Activated T-helper 1 cell treated with anti-CD3 and anti-CD28 coated beads, Interleukin-12 subunit alpha, Interleukin-12 subunit beta, Interleukin-2, Interleukin-4 antibody, amounts not matched to agents 30 ng/mL and 10 ng/mL and 1 ng/mL, durations not matched to agents 14 hours and 24 hours and 36 hours (primary cell): ENCODE measurements at regions of chr1 and their contacts with region 1.

Region 1: GRCh38 chr1:39026051-39026865 is at the start of gene NDUFS5:
- DNase-seq: peak; percentile 78
- H3K4me3 Mint-ChIP-seq: peak within 1 kb of the TSS; percentile 96
- H3K27ac Mint-ChIP-seq: peak within 1 kb of the TSS; percentile 100
- H3K4me1 Mint-ChIP-seq: peaks cover 16% of the 10 kb centered on the region
- H3K27me3 Mint-ChIP-seq: peaks cover 4% of the 10 kb centered on the region
- total RNA-seq, gene NDUFS5: 143 and 150 TPM in 2 replicates

Region 2: DNA sequence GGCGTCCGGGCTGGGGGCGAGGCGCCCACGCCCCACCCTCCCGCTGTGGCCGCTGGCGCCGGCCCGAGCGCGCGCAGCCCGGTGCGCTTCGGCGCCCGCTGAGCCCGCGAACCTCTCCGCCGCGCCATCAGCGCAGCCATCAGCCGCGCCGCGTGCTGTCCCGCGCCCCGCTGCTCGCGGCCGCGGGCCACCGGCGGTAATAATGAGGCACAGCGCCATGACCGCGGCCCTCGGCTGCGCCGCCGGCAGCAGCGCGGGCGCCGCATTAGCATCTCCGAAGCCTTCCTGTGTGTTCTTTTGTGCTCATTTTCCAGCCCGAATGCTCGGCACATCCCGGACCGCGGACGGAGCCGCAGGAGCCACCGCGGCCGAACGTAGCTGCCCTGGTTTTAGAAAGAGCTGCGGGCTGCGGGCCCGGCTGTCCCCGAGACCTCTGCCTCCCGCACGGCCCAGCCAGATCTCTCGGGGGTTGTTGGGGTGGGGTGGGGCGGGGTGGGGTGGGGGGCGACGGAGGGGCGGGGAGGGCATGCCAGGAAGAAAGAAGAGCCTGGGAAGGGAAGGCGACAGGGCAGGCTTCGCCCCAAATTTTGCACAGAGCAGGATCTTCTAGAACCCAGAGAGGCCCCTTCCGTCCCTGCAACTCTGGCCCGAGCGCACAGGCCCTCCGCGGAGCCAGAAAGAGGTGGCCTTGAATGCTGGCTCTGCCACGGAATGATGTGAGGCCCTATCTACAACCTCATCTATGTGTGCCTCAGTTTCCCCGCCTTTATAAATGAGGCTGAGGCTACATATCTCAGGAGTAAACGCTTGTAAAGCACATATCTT is 222.0 kb before region 1 on chr1:
- intact Hi-C with region 1: no loop called
- DNase-seq: no peak
- H3K4me3 Mint-ChIP-seq: peak overlapping the region; percentile 53
- H3K27ac Mint-ChIP-seq: no peak overlapping the region
- H3K4me1 Mint-ChIP-seq: peaks cover 5% of the 10 kb centered on the region
- H3K27me3 Mint-ChIP-seq: peaks cover 50% of the 10 kb centered on the region

Region 3: GRCh38 chr1:38859561-38860453 is 166.5 kb before region 1 on chr1 and contains the start of gene RRAGC:
- intact Hi-C with region 1: loop called (anchors 1 kb)
- DNase-seq: peak; percentile 98
- H3K4me3 Mint-ChIP-seq: peak within 1 kb of the TSS; percentile 89
- H3K27ac Mint-ChIP-seq: peak within 1 kb of the TSS; percentile 74
- H3K4me1 Mint-ChIP-seq: peaks cover 41% of the 10 kb centered on the region
- H3K27me3 Mint-ChIP-seq: no peaks in the 10 kb centered on the region
- total RNA-seq, gene RRAGC: 12.9 and 13.4 TPM in 2 replicates

Region 4: DNA sequence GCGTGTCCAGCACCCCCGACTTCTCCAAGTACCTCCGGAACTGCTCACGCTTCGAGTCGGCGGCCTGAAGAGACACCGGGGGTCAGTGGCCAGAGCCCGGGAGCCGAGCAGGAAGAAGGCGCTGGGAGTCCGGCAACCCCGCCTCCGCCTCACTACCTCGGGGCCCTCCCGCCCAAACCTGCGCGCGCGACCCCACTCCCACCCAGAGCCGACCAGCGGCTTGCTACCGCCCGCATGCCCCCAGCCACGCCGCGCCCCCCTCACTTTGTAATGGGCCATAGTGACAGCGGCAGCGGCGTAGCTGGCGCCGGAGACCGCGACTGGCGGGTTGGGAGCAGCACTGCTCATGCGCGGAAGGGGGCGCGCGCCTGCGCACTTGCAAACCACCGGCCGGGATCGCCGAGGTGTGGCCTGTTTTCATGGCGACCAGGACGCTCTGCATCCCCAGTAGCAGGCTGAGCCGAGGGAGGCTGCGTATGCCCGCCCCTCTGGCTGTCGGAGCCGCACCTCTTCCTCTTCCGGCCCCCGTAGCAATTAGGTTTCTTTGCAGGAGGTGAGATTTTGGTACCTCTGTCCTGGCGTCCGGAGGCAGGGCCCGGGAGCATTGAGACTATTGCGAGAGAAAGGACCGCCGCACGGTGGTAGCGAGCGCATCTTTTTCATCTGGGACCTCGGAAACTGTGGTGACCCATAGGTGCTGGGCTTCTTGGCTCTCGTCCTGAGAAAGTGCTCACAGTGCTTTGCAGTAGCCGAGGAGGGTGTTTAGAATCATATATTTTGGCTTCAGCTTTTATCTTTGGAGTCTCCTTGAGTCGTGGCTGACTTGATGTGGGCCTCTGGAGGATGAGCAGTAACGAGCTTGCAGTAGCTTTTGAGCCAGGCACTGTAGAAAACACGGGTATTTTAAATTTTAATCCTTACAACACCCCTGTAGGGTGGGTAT is 153.0 kb before region 1 on chr1 and contains the start of gene MYCBP:
- intact Hi-C with region 1: loop called (anchors 1 kb)
- DNase-seq: peak; percentile 98
- H3K4me3 Mint-ChIP-seq: peak within 1 kb of the TSS; percentile 87
- H3K27ac Mint-ChIP-seq: peak within 1 kb of the TSS; percentile 79
- H3K4me1 Mint-ChIP-seq: peaks cover 23% of the 10 kb centered on the region
- H3K27me3 Mint-ChIP-seq: no peaks in the 10 kb centered on the region
- total RNA-seq, gene MYCBP: 38.4 and 39.7 TPM in 2 replicates

Region 5: DNA sequence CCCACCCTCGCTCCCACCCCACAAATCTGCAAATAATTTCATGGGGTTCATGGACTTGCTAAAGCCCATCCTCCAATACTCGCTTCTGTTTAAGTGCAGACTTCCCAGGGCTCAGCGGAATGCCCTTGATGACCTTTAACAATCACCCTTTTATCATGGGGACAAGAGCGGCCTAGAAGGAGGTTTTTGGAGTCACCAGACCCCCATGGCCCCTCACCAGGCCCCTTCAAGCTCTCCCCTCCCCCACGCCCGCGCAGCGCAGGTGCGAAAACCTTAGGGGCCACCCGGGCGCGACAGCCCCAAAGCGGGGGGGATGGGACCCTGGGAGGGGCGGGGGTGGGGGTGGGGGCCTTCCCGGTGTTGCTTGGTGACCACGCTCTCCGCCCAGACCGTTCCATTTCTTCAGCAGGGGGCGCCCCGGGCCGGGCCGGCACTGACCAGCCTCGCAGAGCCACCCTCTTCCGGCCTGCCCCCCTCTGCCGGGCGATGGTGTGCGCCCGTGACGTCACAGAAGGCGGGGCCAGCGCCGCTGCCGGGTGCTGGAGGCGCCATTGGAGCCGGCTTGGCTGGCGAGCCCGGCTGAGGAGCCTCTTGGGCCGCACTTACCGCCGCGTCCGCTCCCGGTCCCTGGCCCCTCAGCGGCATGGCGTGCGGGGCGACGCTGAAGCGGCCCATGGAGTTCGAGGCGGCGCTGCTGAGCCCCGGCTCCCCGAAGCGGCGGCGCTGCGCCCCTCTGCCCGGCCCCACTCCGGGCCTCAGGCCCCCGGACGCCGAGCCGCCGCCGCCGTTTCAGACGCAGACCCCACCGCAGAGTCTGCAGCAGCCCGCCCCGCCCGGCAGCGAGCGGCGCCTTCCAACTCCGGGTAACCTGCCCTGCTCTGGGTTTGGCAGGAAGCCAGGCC is 35.3 kb before region 1 on chr1 and contains the start of gene AKIRIN1:
- intact Hi-C with region 1: loop called (anchors 1 kb)
- DNase-seq: peak; percentile 97
- H3K4me3 Mint-ChIP-seq: peak within 1 kb of the TSS; percentile 90
- H3K27ac Mint-ChIP-seq: peak within 1 kb of the TSS; percentile 83
- H3K4me1 Mint-ChIP-seq: peaks cover 34% of the 10 kb centered on the region
- H3K27me3 Mint-ChIP-seq: no peaks in the 10 kb centered on the region
- total RNA-seq, gene AKIRIN1: 78.1 and 78.5 TPM in 2 replicates

Region 6: DNA sequence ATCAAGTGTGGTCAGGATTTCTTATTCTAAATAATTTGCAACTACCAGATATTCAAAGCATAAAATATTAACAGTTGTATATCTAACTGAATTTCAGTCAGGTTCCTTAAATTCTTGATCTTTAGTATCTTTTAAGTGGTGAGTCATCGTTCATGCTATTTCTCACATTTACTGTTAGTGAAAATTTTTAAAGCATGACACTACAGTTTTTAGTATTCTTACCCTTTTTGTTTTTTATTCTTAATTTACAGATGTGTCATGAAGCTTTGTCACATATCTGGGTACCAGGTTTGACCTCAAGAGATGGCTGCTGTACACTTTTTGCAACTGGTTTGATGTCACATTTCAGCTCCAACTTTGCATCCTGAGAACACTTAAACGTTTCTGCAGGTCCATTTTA is 22.5 kb before region 1 on chr1:
- intact Hi-C with region 1: loop called (anchors 2 kb)
- DNase-seq: no peak
- H3K4me3 Mint-ChIP-seq: no peak overlapping the region
- H3K27ac Mint-ChIP-seq: no peak overlapping the region
- H3K4me1 Mint-ChIP-seq: peaks cover 36% of the 10 kb centered on the region
- H3K27me3 Mint-ChIP-seq: no peaks in the 10 kb centered on the region

Region 7: DNA sequence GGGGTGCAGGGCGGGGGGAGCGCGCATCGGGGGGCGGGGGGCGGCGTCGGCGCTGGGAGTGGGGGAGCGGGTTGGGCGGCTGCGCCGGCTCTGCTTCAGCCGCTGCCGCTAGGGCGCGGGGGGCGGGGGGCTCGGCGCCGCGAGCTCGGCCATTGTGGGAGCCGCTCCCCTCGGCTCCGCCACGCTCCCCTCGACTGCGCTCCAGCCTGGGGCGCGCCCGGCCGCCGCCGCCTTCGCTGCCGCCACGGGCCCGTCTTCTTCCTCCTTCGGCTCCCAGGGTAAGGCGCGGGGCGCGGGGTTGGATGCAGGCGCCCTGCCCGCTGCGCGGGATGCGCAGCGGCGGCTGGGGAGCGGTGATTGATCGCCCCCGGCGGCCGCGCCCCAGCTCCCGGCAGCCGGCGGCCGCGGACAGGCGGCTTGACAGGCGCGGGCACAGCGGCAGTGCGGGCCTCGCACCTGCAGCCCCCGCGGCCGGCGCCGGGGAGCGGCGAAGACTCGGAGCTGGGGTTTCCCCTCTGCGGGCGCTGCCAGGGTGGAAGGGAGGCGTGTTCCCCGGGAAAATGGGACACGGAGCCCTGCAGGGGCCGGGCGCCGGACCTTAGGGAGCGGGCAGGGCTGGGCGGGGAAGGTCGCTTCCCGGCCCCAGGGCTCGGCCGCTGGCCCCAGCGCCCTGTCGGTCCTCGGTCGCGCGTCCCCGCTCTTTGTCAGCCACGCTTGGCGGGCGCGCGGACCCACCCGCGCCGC is 55.2 kb after region 1 on chr1:
- intact Hi-C with region 1: loop called (anchors 5 kb)
- DNase-seq: peak; percentile 2
- H3K4me3 Mint-ChIP-seq: no peak overlapping the region
- H3K27ac Mint-ChIP-seq: no peak overlapping the region
- H3K4me1 Mint-ChIP-seq: no peaks in the 10 kb centered on the region
- H3K27me3 Mint-ChIP-seq: peaks cover 48% of the 10 kb centered on the region

Region 8: DNA sequence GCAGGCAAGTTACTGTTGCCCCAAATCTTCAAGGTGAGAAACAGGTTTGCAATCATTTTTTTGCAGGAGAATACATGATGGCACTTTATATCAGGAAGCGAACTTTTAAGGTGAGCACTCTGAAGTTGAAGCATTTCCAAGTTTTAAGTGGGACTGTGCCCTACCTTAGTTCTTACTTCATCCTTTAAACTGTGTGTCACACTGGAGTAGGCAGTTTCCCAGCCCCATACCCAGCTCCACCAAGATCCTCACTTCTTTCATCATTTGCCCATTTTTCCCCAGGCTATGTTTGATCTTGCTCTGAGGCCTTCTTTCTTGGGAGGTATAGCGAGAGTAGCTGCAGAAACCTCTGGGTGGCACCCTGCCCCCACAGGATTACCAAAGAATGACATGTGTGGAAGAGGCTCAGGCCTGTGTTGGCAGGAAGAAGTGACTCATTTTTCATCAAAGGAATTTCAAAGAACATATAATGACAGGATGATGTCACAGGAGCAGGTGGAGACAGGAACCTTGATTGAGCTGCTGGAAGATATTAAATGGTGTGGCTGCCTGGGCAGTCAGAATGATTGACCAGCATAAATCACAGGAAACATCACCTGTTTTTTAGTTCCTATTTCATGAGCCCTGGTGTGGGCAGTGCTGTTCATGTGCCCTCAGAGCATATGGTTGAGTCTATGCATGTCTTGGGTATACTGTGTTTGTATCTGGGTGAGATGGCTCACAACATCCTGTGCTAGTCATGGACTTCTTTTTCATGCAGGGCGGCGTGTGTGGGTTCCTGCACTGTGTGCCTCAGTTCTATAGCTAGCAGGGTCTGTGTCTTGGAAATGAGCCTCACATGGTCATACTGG is 157.5 kb after region 1 on chr1:
- intact Hi-C with region 1: loop called (anchors 5 kb)
- DNase-seq: peak; percentile 78
- H3K4me3 Mint-ChIP-seq: peak overlapping the region; percentile 57
- H3K27ac Mint-ChIP-seq: peak overlapping the region; percentile 97
- H3K4me1 Mint-ChIP-seq: peaks cover 53% of the 10 kb centered on the region
- H3K27me3 Mint-ChIP-seq: no peaks in the 10 kb centered on the region